ENCODE measurements at regions of chr17 and their contacts with region 1.

Region 1: DNA sequence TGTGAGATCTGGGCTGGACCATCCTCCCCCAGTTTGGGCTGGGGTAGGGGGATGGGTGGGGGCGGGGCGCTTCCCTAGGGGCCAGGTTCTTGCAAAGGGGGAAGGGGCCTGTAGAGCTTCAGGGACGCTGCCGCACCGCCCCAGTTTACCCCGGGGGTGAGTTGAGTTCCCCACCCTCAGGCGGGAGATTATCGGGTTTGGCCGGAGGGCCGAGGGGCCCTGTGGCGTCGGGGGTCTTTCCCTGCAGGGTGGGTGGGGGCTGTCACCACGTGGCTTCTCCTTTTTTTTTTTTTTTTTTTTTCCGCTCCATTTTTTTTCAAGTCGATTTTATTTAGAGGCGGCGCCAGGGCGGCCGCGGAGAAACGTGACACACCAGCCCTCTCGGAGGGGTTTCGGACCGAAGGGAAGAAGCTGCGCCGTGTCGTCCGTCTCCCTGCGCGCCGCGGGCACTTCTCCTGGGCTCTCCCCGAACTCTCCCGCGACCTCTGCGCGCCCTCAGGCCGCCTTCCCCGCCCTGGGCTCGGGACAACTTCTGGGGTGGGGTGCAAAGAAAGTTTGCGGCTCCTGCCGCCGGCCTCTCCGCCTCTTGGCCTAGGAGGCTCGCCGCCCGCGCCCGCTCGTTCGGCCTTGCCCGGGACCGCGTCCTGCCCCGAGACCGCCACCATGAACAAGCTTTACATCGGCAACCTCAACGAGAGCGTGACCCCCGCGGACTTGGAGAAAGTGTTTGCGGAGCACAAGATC is at the start of gene IGF2BP1:
- DNase-seq: no peak
- H3K4me3 ChIP-seq: no peak within 1 kb of the TSS
- H3K27ac ChIP-seq: no peak within 1 kb of the TSS
- H3K4me1 ChIP-seq: peaks cover 9 to 28% of the 10 kb centered on the region in 2 donors
- H3K27me3 ChIP-seq: peaks cover 74% of the 10 kb centered on the region
- CTCF ChIP-seq: no peak
- POLR2A ChIP-seq: no peak
- total RNA-seq, gene IGF2BP1: 0.33 to 0.94 TPM in 2 of 4 donors, not detected in the others

Region 2: DNA sequence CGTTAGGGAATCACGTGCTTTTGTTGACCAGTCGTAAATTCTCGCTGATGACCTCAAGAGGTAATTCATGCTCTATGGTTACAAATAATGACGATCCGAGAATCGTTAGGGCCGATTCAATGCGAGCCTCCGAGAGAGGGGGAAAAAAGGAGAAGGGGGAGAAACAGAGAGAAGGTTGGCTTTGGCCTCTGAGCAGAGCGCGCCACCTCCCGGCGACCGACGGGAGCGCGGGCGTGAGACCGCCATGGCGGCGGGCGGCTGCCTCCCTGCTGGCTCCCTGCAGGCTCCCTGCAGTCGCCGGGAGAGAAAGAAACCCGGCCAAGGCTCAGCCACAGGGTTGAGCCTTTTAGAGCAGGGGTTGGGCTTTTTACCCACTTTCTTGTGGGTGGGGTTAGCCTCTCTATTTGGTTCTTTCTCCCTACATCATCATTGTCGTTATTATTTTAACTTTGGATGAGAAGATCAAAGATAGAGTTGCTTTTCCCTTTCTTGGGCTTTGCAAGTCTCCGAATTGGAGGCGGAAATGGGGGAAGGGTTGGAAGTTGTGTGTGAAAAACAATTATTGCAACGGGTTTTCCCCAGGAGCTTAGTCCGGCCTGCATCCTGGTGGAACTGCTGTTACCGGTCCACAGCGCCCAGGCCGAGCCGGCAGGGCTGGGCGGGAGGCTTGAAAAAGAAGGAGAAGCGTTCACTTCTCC is 403.3 kb before region 1 on chr17:
- intact Hi-C with region 1: loop called (anchors 10 kb)
- DNase-seq: peak; percentile 53 to 62
- H3K4me3 ChIP-seq: no peak overlapping the region
- H3K27ac ChIP-seq: no peak overlapping the region
- H3K4me1 ChIP-seq: peaks cover 5 to 29% of the 10 kb centered on the region in 2 donors
- H3K27me3 ChIP-seq: peaks cover 67% of the 10 kb centered on the region
- CTCF ChIP-seq: peak in 5 of 6 experiments; percentile 39 to 87 (median 56)
- POLR2A ChIP-seq: no peak

Region 3: GRCh38 chr17:48738803-48739526 is 258.3 kb before region 1 on chr17:
- intact Hi-C with region 1: loop called (anchors 10 kb)
- DNase-seq: no peak
- H3K4me3 ChIP-seq: no peak overlapping the region
- H3K27ac ChIP-seq: no peak overlapping the region
- H3K4me1 ChIP-seq: no peaks in the 10 kb centered on the region
- H3K27me3 ChIP-seq: peaks cover 73% of the 10 kb centered on the region
- CTCF ChIP-seq: no peak
- POLR2A ChIP-seq: no peak

Region 4: GRCh38 chr17:49031965-49032928 is 35.0 kb after region 1 on chr17:
- intact Hi-C with region 1: no loop called
- DNase-seq: peak; percentile 44 to 51
- H3K4me3 ChIP-seq: no peak overlapping the region
- H3K27ac ChIP-seq: no peak overlapping the region
- H3K4me1 ChIP-seq: no peaks in the 10 kb centered on the region
- H3K27me3 ChIP-seq: no peaks in the 10 kb centered on the region
- CTCF ChIP-seq: peak; percentile 39 to 86 (median 76)
- POLR2A ChIP-seq: no peak

Region 5: DNA sequence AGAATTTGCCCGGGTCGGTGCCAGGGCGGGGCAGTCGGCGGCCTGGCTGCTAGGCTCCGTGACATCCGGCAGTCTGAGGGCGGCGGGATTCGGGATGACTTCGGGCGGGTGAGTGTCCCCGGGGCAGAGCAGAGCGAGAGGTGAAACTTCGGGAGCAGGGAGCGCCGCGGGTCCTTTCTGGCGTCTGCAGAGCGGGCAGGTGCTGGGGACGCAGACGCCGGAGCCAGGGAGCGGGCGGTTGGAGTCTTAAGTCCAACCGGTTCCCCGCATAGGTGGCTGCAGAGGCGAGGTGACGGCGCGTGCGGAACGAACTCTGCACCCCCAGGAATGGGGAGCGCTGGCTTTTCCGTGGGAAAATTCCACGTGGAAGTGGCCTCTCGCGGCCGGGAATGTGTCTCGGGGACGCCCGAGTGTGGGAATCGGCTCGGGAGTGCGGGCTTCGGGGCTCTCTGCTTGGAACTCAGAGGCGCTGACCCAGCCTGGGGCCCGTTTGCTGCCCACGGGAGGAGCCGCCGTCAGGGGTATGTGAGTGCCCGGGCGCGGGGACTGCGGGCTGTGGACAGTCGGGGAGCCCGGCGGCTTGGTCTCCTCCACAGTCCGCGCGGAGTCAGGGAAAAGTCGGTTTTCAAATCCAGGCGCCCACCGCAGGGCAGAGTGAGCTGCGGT is 135.6 kb after region 1 on chr17 and contains the start of gene B4GALNT2:
- intact Hi-C with region 1: no loop called
- DNase-seq: peak; percentile 52 to 58
- H3K4me3 ChIP-seq: peak within 1 kb of the TSS in 2 of 3 donors; percentile 27 to 41
- H3K27ac ChIP-seq: peak within 1 kb of the TSS in 1 of 3 donors; percentile 26
- H3K4me1 ChIP-seq: peaks cover 0 to 12% of the 10 kb centered on the region in 2 donors
- H3K27me3 ChIP-seq: no peaks in the 10 kb centered on the region
- CTCF ChIP-seq: no peak
- POLR2A ChIP-seq: peak in 1 of 2 donors; percentile 38
- total RNA-seq, gene B4GALNT2: 0.33 to 10.1 (median 3.9) TPM

Region 6: GRCh38 chr17:49496183-49496866 is 499.1 kb after region 1 on chr17:
- intact Hi-C with region 1: no loop called
- DNase-seq: peak; percentile 76 to 77
- H3K4me3 ChIP-seq: peak overlapping the region in 1 of 3 donors; percentile 37
- H3K27ac ChIP-seq: no peak overlapping the region
- H3K4me1 ChIP-seq: peaks cover 20 to 36% of the 10 kb centered on the region in 2 donors
- H3K27me3 ChIP-seq: peaks cover 23% of the 10 kb centered on the region
- CTCF ChIP-seq: peak; percentile 30 to 94 (median 78)
- POLR2A ChIP-seq: no peak

Measured in thyroid gland (tissue), 4 donors.